ENCODE measurements at regions of chr1 and their contacts with region 1.

Region 1: DNA sequence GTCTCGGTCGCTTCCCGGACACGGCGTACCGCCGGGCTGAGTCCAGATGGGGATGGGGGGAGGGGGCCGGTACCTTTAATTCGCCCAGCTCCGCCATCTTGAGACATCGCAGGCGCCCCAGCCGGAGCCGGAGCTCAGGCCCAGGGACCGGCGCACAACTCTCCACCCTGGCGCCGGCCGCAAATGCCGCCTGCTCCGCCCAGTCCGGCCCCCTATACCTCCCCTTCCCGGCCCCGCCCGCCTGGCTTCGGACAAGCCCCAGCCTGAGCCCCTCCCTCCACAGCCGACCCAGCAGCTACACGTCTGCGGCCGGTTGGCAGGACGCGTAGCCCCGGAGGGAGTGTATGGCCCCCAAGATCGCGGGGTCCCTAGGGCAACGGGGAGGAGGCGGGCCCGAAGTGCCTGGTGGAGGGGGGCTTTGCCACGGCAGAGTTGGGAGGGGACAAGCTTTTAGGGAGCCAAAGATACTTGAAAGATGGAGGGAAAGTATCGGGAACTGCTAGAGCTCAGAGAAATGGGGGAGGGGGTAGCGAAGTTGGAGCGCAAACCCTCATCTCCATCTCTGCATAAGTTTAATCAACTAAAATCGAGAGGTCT is at the start of gene PIAS3:
- ATAC-seq: peak; percentile 82 to 90 (median 86)
- H3K4me3 ChIP-seq: peak within 1 kb of the TSS; percentile 64 to 97 (median 93)
- H3K27ac ChIP-seq: peak within 1 kb of the TSS; percentile 90 to 93
- H3K4me1 ChIP-seq: peaks cover 5 to 8% of the 10 kb centered on the region in 2 donors
- total RNA-seq, gene PIAS3: 8.2 to 24.9 (median 18.9) TPM

Region 2: GRCh38 chr1:145751491-145752037 is 107.4 kb before region 1 on chr1:
- in situ Hi-C with region 1: loop called in 1 of 9 experiments (anchors 25 kb)
- ATAC-seq: peak in 7 of 8 experiments; percentile 14 to 72 (median 66)
- H3K4me3 ChIP-seq: no peak overlapping the region
- H3K27ac ChIP-seq: no peak overlapping the region
- H3K4me1 ChIP-seq: no peaks in the 10 kb centered on the region

Region 3: GRCh38 chr1:145957443-145958319 is 98.7 kb after region 1 on chr1 and contains the start of gene LIX1L:
- in situ Hi-C with region 1: no loop called
- ATAC-seq: peak; percentile 81 to 88 (median 86)
- H3K4me3 ChIP-seq: peak within 1 kb of the TSS; percentile 55 to 95 (median 69)
- H3K27ac ChIP-seq: peak within 1 kb of the TSS; percentile 70 to 73
- H3K4me1 ChIP-seq: peaks cover 30 to 48% of the 10 kb centered on the region in 2 donors
- total RNA-seq, gene LIX1L: 15.9 to 34.4 (median 23.2) TPM